ENCODE measurements at regions of chr17 and their contacts with region 1.

Region 1: GRCh38 chr17:58541249-58541648 is 26.8 kb upstream of the MTMR4 start:
- DNase-seq: no peak

Region 2: DNA sequence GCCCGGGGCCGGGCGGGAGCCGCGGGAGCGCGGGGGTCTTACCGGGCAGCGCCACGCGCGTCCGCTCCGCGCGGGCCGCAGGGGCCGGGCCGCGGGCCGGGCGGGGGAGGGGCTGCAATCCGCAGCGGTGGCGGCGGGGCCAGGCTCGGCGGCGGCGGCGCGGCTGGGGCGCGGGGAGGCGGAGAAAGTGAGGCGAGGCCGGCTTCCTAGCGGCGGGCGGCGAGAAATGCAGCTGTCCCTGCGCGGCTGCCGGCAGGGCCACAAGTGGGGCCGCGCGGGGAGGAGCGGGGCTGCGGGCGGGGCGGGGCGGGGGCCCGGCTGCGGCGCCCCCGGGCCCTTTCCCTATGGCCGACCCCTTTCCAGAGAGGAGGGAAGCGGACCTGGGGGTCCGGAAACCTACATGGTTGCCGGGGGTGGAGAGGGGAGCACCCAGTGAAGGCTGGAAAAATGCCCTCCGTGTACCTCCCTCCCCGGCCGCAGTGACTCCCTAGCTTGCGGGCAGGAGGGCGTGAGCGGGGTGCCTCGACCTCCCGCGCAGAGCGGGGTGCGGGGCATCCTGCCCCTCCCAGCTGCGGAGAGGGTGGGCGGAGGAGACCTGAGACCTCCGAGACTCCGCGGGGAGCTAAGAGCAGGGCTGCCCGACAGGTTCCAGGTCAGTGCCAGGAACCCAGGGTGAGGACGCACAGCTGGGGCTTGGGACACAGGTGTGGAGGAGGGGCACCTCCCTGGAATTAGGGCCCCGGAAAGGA is 585.9 kb before region 1 on chr17 and contains the start of gene CUEDC1:
- intact Hi-C with region 1: no loop called
- DNase-seq: peak; percentile 95
- total RNA-seq, gene CUEDC1: 42.3 to 43.6 TPM

Region 3: DNA sequence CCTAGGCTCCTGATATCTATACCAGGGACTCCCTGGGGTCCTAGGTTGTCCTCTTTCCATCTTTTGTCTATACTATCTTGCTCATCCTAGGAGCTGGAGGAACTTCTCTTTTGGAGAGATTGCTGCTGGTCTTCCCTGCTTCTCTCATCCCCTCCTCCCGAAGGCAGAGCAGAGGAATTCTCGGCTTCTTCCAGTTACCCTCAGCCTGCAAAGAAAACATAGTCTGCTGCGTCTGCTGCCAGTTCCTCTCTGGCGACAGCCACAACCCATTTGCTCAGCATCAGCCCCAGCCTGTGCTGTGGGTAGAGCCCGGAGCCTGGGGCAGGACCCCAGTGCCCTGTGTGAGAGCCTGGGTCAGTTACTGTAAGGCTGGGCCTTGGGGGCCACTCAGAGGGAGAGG is 479.6 kb before region 1 on chr17:
- intact Hi-C with region 1: no loop called
- DNase-seq: no peak

Region 4: GRCh38 chr17:58504826-58505521 is 36.3 kb before region 1 on chr17:
- intact Hi-C with region 1: no loop called
- DNase-seq: no peak

Region 5: GRCh38 chr17:58621174-58621573 is 79.9 kb after region 1 on chr17:
- intact Hi-C with region 1: loop called in 1 of 2 experiments (anchors 10 kb)
- DNase-seq: no peak

Measured in posterior vena cava (tissue), 2 donors.